ENCODE measurements at regions of chr17 and their contacts with region 1.

Region 1: DNA sequence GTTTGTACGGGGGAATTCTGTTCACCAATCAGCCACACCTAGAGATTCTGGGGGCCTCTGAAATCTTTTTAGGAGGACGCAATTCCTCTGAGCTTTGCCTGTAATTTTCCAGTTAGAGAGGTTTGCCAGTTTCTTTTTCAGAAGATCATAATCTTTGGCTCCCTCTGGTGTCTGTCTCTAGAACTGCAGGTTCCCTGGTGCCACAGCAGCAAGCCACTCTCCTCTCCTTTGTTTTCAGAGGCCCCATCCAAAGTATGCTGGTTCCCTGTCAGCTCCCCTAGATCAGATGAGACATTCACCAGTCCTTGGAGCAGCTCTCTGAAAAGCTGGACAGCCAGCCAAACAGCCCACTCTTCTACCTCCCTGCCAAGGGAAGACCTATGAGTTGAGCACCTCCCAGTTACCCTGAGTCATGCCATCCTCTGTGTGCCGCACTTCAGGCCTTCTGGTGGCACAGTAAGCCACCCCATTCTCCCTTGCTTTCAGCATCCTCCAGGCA is 36.1 kb downstream of the RNF112 start:
- DNase-seq: peak; percentile 73
- H3K4me3 Mint-ChIP-seq: no peak overlapping the region
- H3K27ac Mint-ChIP-seq: peak overlapping the region; percentile 93
- H3K4me1 Mint-ChIP-seq: peaks cover 27% of the 10 kb centered on the region
- H3K27me3 Mint-ChIP-seq: no peaks in the 10 kb centered on the region
- CTCF ChIP-seq: peak; percentile 88

Region 2: GRCh38 chr17:19377602-19378392 is 69.3 kb before region 1 on chr17:
- CTCF ChIA-PET with region 1: interaction called, 21 read pairs
- POLR2A ChIA-PET with region 1: interaction called, 54 read pairs
- intact Hi-C with region 1: loop called (anchors 5 kb)
- DNase-seq: peak; percentile 98
- H3K4me3 Mint-ChIP-seq: peak overlapping the region; percentile 94
- H3K27ac Mint-ChIP-seq: peak overlapping the region; percentile 99
- H3K4me1 Mint-ChIP-seq: peaks cover 16% of the 10 kb centered on the region
- H3K27me3 Mint-ChIP-seq: no peaks in the 10 kb centered on the region
- CTCF ChIP-seq: no peak

Region 3: DNA sequence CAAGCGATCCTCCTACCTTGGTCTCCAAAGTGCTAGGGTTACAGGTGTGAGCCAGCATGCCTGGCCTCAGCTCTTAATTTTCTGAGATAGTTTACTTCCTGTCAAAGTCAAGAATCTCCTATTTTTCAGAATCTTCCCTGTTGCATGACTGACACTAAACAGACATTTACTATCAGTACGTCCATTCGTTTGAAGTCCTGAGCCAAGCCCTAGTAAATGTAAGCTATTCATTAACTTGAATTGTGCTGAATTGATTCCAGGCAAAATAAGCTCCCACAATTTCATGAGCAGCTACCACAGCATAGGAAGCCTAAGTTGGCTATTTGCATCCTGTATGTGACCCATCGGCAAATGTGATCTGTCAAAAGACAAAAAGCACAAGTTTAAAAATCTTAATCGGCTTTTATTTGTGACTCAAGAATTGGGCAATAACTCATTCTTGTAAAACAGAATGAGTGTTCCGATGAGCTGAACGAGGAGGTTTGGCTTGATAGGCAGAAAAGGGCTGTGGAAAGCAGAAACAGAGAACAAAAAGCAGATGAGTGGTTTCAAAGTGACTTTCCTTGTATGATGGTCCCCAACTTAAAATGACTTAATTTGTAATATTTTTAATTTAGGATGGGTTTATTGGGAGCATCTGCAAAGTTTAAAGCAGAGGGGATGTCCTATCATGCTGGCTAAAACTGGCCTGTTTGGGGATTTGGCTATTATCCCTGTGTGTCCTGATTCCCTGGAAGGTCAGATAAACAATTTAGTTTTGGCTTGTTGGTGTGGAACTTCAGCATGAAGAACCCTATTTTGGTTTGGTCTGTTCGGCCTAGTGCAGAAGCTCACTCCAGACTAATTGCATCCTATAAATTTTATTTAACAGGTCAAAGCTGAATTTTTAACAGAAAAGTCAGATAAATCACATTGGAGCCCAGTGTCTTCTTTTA is 21.9 kb before region 1 on chr17:
- CTCF ChIA-PET with region 1: interaction called, 16 read pairs
- POLR2A ChIA-PET with region 1: interaction called, 4 read pairs
- intact Hi-C with region 1: no loop called
- DNase-seq: no peak
- H3K4me3 Mint-ChIP-seq: no peak overlapping the region
- H3K27ac Mint-ChIP-seq: no peak overlapping the region
- H3K4me1 Mint-ChIP-seq: no peaks in the 10 kb centered on the region
- H3K27me3 Mint-ChIP-seq: no peaks in the 10 kb centered on the region
- CTCF ChIP-seq: no peak

Region 4: DNA sequence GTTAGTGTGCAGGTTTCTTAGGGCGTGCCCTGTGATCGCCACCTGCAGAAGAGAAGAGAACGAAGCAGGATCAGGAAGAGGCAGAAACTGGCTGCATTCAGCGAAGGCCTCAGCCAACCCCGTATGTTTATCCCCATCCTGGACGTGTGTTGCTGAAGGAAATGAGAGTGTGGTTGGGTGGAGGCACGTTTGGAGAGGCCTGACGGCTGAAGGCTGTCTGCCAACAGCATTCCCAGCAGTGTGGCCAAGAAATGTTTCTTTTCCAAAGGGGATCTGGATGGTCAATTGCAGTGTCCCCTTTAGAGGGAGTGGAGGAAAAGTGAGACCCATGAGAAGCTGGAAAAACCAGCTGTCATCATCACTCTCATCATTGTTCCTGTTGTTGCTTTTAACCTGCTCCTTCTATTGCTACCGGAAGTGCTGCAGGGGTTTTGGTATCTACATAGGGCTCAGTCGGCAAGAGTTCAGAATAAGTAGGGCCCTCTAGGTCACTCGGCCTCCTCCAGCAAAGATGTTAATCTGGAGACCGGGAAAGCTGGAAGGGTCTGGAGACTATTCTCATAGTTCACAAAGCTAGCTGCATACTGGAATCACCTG is 40.0 kb after region 1 on chr17:
- CTCF ChIA-PET with region 1: no interaction called
- POLR2A ChIA-PET with region 1: no interaction called
- intact Hi-C with region 1: no loop called
- DNase-seq: no peak
- H3K4me3 Mint-ChIP-seq: no peak overlapping the region
- H3K27ac Mint-ChIP-seq: no peak overlapping the region
- H3K4me1 Mint-ChIP-seq: peaks cover 7% of the 10 kb centered on the region
- H3K27me3 Mint-ChIP-seq: no peaks in the 10 kb centered on the region
- CTCF ChIP-seq: no peak

Region 5: GRCh38 chr17:19558946-19559345 is 111.8 kb after region 1 on chr17:
- CTCF ChIA-PET with region 1: no interaction called
- POLR2A ChIA-PET with region 1: no interaction called
- intact Hi-C with region 1: no loop called
- DNase-seq: no peak
- H3K4me3 Mint-ChIP-seq: no peak overlapping the region
- H3K27ac Mint-ChIP-seq: no peak overlapping the region
- H3K4me1 Mint-ChIP-seq: no peaks in the 10 kb centered on the region
- H3K27me3 Mint-ChIP-seq: peaks cover 11% of the 10 kb centered on the region
- CTCF ChIP-seq: no peak

Region 6: GRCh38 chr17:19630661-19631060 is 183.5 kb after region 1 on chr17:
- CTCF ChIA-PET with region 1: no interaction called
- POLR2A ChIA-PET with region 1: no interaction called
- intact Hi-C with region 1: no loop called
- DNase-seq: peak; percentile 11
- H3K4me3 Mint-ChIP-seq: no peak overlapping the region
- H3K27ac Mint-ChIP-seq: no peak overlapping the region
- H3K4me1 Mint-ChIP-seq: peaks cover 16% of the 10 kb centered on the region
- H3K27me3 Mint-ChIP-seq: no peaks in the 10 kb centered on the region
- CTCF ChIP-seq: no peak

Region 7: DNA sequence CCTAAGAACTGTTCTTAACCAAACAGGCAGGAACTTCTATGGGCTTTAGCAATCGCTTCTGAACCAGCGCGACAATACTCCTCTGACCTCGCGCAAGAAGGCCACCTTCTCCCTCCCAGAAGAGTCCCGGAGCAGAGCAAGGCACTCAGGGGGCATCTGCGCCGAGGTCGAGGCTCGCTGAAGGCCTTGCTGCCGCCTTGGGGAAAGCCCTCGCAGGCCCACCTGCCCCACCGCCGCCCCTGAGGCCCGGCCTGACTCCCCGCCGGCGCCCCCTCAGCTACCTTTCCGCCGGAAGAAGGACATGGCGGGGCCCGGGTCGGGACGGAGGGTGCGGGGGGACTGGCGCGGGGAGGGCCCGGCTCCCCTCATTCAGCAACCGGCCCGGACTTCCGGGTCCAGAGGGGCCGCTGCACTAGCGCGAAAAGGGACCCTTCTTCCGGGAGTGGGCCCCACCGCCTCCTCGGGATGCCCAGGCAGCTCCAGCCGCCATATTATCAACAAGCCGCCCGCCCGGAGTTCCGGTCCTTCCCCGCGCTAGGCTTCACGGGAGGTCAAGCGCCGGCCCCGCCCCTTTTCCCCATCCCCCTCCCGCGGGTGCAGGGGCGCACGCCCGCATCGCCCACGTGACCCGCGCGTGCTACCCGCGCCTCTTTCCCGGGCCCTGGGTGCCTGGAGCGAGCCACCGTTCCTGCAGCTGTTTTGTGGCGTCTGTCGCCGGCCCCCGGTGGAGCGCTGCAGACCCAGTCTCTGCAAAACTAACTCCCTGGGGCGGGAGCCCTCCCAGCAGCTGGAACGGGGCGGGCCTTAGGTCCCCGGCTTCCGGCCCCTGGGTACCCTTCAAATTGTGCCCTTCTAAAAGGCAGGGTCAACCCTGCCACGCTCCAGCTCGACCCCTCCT is 530.4 kb after region 1 on chr17 and contains the start of gene AKAP10:
- CTCF ChIA-PET with region 1: no interaction called
- POLR2A ChIA-PET with region 1: no interaction called
- intact Hi-C with region 1: no loop called
- DNase-seq: peak; percentile 85
- H3K4me3 Mint-ChIP-seq: peak within 1 kb of the TSS; percentile 82
- H3K27ac Mint-ChIP-seq: peak within 1 kb of the TSS; percentile 81
- H3K4me1 Mint-ChIP-seq: peaks cover 9% of the 10 kb centered on the region
- H3K27me3 Mint-ChIP-seq: no peaks in the 10 kb centered on the region
- CTCF ChIP-seq: no peak
- total RNA-seq, gene AKAP10: 33.7 and 34.1 TPM in 2 replicates

Measured in MCF 10A (cell line).